Activated CD4-positive, alpha-beta T cell treated with anti-CD3 and anti-CD28 coated beads, Interleukin-2, amount 10 ng/mL, durations not matched to agents 24 days and 14 days (primary cell): ENCODE measurements at regions of chr6 and their contacts with region 1.

Region 1: DNA sequence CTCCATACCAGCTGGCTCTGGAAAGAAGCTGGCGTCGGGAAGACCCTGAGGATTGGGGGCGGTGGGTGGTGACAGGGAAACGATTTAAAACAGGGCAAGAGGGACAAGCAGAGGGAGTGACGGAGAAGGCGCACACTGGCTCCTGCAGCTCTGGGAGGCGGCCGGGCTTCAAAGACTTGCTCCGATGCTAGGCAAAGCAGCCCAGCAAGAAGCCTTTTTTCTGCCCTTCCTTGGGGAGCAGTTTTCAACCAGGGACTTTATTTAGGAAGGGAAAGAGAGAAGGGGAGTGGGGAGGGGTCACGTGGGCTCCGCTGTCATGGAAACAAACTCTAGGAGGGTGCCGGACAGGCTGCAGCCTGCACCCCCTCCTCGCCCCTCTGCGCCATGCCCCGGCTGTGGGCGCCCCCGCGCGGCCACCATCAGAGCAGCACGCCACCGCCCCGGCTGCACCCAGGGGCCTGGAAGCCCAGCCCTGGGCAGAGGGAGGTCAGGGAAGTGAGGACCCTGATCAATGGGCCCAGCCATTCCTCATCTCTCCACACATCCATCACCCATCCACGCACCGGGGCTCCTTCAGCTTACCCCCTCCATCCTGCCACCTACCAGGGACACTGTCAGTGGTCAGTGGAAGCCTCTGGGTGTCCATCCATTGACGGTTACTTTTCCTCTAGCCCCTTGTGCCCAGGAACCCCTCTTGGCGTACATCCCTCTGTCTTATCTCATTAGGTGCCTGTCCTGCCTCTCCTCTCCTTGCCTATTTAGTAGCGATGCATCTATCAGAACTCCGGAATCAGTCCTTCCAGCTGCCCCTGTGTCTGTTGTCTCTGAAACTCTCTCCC is 66.6 kb upstream of the CCDC167 start:
- DNase-seq: peak; percentile 94
- H3K4me3 Mint-ChIP-seq: peak overlapping the region; percentile 43
- H3K27ac Mint-ChIP-seq: no peak overlapping the region
- H3K4me1 Mint-ChIP-seq: peaks cover 2% of the 10 kb centered on the region
- H3K27me3 Mint-ChIP-seq: peaks cover 34% of the 10 kb centered on the region

Region 2: DNA sequence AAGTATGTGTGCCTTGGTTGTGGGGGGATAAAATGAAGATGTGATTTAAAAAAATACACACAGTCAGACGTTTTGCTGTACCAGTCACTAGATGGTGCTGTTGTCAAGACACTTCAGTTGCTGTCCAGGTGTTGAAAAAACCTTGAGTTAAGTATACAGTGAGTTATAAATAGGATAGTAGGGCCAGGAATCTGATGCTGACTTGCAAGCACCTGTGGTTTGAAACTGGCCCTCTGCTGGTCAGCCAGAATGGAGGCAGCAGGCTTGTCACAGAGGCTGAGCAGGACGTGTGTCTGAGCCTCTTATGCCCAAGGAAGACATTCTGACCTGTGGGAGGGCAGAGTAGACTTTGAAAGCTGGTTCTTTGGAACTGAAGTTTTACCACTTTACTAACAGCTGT is 184.8 kb before region 1 on chr6:
- intact Hi-C with region 1: loop called (anchors 1 kb)
- DNase-seq: peak; percentile 79
- H3K4me3 Mint-ChIP-seq: no peak overlapping the region
- H3K27ac Mint-ChIP-seq: no peak overlapping the region
- H3K4me1 Mint-ChIP-seq: no peaks in the 10 kb centered on the region
- H3K27me3 Mint-ChIP-seq: no peaks in the 10 kb centered on the region

Region 3: GRCh38 chr6:37483917-37484785 is 82.2 kb before region 1 on chr6:
- intact Hi-C with region 1: loop called (anchors 1 kb)
- DNase-seq: peak; percentile 92
- H3K4me3 Mint-ChIP-seq: no peak overlapping the region
- H3K27ac Mint-ChIP-seq: no peak overlapping the region
- H3K4me1 Mint-ChIP-seq: peaks cover 9% of the 10 kb centered on the region
- H3K27me3 Mint-ChIP-seq: no peaks in the 10 kb centered on the region

Region 4: GRCh38 chr6:37525460-37526357 is 40.6 kb before region 1 on chr6:
- intact Hi-C with region 1: loop called (anchors 5 kb)
- DNase-seq: peak; percentile 70
- H3K4me3 Mint-ChIP-seq: no peak overlapping the region
- H3K27ac Mint-ChIP-seq: no peak overlapping the region
- H3K4me1 Mint-ChIP-seq: peaks cover 7% of the 10 kb centered on the region
- H3K27me3 Mint-ChIP-seq: peaks cover 18% of the 10 kb centered on the region

Region 5: DNA sequence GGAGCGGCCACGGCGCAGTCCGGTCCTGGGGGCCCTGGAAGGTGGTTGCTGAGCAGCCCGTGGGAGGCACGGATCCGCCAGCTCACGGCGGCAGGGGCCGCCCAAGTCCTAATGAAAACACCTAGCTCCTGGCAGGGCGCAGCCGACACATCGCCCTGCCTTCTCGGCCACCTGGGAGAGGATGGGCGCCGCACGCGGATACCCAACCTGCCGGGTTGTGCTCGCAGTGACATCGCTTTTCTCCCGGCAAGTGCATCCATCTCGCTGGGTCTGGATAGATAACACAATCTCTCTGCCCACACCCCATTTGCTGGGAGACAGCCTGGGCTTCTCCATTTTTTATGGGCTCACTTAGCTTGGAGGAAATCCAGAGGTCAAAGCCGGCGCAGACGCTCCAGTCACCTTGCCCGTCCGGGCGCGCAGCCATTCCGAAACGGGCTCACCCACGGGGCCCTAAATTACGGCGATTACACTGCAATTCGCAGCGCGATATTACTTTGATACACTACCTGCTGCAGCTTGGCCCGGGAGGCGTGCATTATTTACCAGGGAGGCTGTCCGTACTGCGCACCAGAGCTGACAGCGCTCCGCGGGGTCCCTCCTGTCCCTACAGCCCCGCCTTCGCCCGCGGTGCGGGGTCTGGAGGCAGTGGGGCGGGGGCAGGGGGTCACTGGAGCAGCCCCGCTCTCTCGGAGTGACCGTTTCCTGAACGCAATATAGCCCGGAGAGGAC is 30.4 kb before region 1 on chr6:
- intact Hi-C with region 1: loop called (anchors 1 kb)
- DNase-seq: peak; percentile 67
- H3K4me3 Mint-ChIP-seq: peak overlapping the region; percentile 64
- H3K27ac Mint-ChIP-seq: no peak overlapping the region
- H3K4me1 Mint-ChIP-seq: peaks cover 12% of the 10 kb centered on the region
- H3K27me3 Mint-ChIP-seq: peaks cover 55% of the 10 kb centered on the region

Region 6: DNA sequence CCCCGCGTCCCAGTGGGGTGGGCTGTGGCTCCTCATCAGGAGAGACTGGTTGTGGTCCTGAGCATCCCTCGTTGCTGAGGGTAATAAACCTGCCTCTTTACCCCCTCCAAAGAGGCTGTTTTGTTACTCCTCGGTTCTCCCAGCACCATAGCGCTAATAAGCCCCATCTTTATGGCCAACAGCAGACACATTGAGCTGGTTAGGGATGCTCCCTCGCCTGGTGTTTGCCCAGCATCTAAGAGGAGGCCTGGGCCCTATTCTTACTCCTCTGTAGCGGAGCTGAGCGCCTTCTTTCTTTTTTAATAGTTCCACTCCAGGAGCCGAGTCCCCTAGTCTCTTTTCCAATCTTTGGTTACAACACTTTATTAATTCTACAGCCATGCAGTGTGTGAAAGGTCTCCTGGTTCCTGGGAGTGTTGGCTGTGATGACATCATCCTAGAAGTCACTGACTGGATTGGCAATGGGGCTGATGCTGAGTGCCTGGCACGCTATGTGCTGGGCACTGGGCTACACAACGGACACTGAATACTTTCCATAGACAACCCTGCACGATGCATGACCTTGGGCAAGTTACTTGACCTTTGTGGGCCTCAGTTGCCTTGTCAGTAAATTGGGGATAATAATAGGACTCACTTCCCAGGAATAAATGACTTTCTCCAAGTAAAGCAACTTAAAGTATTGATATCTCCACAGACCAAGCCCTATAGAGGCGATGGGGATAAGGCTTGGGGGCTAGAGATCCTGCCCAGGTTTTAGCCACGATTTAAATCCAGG is 16.0 kb before region 1 on chr6:
- intact Hi-C with region 1: loop called (anchors 1 kb)
- DNase-seq: no peak
- H3K4me3 Mint-ChIP-seq: no peak overlapping the region
- H3K27ac Mint-ChIP-seq: no peak overlapping the region
- H3K4me1 Mint-ChIP-seq: peaks cover 27% of the 10 kb centered on the region
- H3K27me3 Mint-ChIP-seq: no peaks in the 10 kb centered on the region

Region 7: DNA sequence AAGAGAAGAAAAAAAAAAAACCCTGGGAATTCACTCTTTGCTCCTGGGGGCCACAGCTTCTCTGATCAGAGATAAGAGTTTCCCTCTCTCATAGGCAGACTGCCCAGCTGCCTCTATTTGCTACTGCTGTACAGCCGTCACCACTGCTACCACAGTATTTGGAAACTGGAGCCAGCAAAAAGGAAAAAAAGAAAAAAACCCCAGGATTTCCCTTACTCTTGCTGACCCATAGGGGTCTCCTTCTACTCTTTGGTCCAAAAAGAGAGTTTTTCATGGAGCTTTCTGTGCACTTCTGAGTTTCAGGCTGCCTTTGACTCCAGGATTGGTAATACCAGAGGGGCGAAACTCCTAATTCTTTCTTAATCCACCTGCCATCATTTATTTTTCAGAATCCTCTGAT is 41.6 kb after region 1 on chr6:
- intact Hi-C with region 1: no loop called
- DNase-seq: no peak
- H3K4me3 Mint-ChIP-seq: no peak overlapping the region
- H3K27ac Mint-ChIP-seq: no peak overlapping the region
- H3K4me1 Mint-ChIP-seq: no peaks in the 10 kb centered on the region
- H3K27me3 Mint-ChIP-seq: peaks cover 36% of the 10 kb centered on the region

Region 8: GRCh38 chr6:37624986-37625574 is 58.8 kb after region 1 on chr6:
- intact Hi-C with region 1: no loop called
- DNase-seq: no peak
- H3K4me3 Mint-ChIP-seq: peak overlapping the region; percentile 19
- H3K27ac Mint-ChIP-seq: no peak overlapping the region
- H3K4me1 Mint-ChIP-seq: peaks cover 22% of the 10 kb centered on the region
- H3K27me3 Mint-ChIP-seq: peaks cover 15% of the 10 kb centered on the region

Region 9: DNA sequence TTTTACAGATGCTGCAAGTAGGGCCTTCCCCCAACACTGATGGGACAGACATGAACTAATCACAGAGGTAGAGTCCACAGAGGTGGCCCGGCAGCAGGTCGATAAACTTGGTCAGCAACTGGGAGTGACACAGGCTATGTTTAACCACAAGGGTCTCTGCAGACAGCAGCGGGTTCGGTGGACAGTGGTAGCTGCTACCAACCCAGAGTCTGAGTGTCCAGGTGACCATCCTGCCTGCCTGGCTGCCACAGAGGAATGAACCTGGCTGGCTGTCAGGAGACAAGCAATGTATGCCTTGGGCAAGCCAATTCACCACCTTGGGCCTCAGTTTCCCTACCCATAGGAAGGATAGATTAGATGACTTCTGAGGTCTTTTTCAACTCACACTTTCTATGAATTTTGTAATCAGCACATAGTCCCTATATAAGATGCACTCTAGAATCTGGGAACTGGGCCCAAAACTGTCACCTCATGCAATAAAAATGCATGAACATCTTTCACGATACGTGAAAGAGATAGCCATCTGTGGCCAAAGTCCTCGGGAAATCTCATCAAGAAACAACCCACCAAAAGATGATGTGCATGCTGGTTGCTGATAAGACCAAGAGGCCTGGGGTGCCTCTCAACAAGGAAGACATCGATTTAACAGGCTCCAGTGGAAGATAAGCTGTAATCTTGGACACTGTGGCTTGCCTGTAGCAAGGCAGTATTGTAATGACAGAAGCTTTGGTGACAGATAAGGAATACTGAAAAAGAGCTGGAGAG is 100.9 kb after region 1 on chr6:
- intact Hi-C with region 1: no loop called
- DNase-seq: no peak
- H3K4me3 Mint-ChIP-seq: no peak overlapping the region
- H3K27ac Mint-ChIP-seq: no peak overlapping the region
- H3K4me1 Mint-ChIP-seq: peaks cover 4% of the 10 kb centered on the region
- H3K27me3 Mint-ChIP-seq: no peaks in the 10 kb centered on the region

Region 10: DNA sequence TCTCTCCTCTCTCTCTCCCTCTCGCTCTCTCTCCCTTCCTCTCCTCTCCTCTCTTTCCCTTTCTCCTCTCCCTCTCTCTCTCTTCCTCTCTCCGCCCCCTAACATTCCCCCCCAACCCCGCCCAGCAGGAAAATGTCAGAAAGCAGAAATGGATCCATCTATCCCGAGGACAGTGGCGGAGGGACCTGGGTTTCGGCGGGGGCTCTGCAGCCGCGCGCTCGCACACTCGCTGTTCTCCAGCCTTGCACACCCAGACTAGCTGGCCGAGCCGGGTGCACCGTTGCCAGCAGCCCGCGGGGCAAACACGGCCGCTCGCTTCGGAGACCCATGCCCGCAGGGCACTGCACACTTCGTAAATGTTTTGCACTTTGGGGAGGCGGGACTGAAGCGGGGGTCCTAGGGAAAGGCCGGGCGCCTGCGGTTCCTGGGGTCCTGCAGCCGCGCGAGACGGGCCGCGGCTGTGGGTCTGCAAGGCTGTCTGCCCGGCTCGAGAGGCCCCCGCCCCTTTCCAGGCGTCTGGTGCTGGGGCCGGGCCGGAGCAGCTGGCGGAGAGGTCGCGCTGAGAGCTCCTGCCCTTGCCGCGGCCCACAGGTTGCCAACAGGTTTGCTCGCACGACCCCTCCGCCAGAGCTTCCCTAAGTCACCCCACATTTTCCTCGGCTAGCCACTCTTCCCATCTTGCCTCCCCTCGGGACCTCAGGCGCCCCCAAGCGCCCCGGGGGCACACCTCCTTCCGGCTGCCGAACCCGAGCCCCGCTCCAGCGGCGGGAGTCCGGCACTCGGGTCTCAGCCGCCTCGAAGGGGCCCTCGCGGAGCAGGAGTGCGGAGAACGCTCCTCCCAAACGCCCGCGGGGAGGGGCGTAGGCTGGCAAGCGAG is 132.2 kb after region 1 on chr6:
- intact Hi-C with region 1: loop called (anchors 5 kb)
- DNase-seq: peak; percentile 90
- H3K4me3 Mint-ChIP-seq: peak overlapping the region; percentile 97
- H3K27ac Mint-ChIP-seq: peak overlapping the region; percentile 93
- H3K4me1 Mint-ChIP-seq: peaks cover 26% of the 10 kb centered on the region
- H3K27me3 Mint-ChIP-seq: peaks cover 59% of the 10 kb centered on the region